GM13977 (cell line): ENCODE measurements at regions of chr19 and their contacts with region 1.

Region 1: DNA sequence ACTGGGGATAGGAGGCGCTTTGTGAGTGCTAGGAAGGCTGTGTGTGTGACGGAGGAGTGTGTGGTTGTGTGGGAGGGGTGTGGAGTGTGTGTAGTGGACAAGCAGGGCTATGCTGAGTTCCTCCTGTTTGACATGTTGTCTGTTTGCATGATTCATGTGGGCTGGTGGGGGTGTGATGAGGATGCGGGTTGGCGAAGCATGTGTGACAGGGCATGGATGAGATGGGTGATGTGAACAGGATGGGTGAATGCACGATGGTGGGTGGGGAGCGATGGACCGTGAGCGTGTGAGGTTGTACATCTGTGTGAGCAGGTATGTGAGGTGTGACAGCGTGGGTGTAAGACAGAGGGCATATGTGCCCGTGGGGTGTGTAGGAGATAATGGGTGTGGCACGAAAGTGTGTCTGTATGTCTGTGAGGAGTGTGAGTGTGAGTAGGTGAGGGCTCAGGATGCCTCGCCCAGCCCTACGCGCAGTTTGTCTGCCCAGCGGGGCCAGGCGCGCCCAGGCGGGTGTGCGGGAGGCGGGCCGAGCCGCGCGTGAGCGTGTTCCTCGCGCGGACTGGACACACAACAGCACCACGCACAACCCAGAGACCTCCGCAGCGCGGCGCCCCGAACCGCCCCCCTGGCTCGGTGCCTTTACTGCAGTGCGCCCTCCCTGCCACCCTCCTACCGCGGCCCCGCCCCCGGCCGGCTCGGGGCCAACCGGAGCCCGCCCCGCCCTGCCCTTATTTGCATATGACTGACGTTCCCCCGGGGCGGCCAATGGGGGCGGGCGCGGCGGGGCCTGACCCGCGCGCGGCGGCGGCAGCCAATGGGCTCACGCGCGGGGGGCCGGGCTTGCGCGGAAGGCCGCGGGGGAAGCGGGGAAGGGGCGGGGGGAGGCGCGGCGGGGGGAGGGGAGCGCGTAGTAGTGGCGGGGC is 14.4 kb downstream of the CIC start:
- DNase-seq: peak; percentile 99
- CTCF ChIP-seq: no peak

Region 2: GRCh38 chr19:42108527-42109389 is 174.6 kb before region 1 on chr19:
- in situ Hi-C with region 1: loop called (anchors 25 kb)
- DNase-seq: peak; percentile 87
- CTCF ChIP-seq: peak; percentile 100